B cell (primary cell): ENCODE measurements at regions of chr15 and their contacts with region 1.

Region 1: GRCh38 chr15:82108489-82109078 is 62.8 kb upstream of the MEX3B start:
- DNase-seq: peak; percentile 65
- ATAC-seq: peak; percentile 86
- H3K4me3 ChIP-seq: no peak overlapping the region
- H3K4me3 Mint-ChIP-seq: no peak overlapping the region
- H3K27ac ChIP-seq: no peak overlapping the region
- H3K27ac Mint-ChIP-seq: no peak overlapping the region
- H3K4me1 ChIP-seq: no peaks in the 10 kb centered on the region
- H3K4me1 Mint-ChIP-seq: no peaks in the 10 kb centered on the region
- H3K27me3 ChIP-seq: no peaks in the 10 kb centered on the region
- H3K27me3 Mint-ChIP-seq: peaks cover 4% of the 10 kb centered on the region
- CTCF ChIP-seq: peak; percentile 79

Region 2: GRCh38 chr15:80801891-80802680 is 1306.5 kb before region 1 on chr15:
- CTCF ChIA-PET with region 1: no interaction called
- POLR2A ChIA-PET with region 1: no interaction called
- intact Hi-C with region 1: no loop called
- DNase-seq: no peak
- ATAC-seq: no peak
- H3K4me3 ChIP-seq: no peak overlapping the region
- H3K4me3 Mint-ChIP-seq: no peak overlapping the region
- H3K27ac ChIP-seq: no peak overlapping the region
- H3K27ac Mint-ChIP-seq: no peak overlapping the region
- H3K4me1 ChIP-seq: no peaks in the 10 kb centered on the region
- H3K4me1 Mint-ChIP-seq: no peaks in the 10 kb centered on the region
- H3K27me3 ChIP-seq: no peaks in the 10 kb centered on the region
- H3K27me3 Mint-ChIP-seq: peaks cover 2% of the 10 kb centered on the region
- CTCF ChIP-seq: no peak

Region 3: GRCh38 chr15:81809543-81809942 is 299.0 kb before region 1 on chr15:
- CTCF ChIA-PET with region 1: no interaction called
- POLR2A ChIA-PET with region 1: no interaction called
- intact Hi-C with region 1: no loop called
- DNase-seq: no peak
- ATAC-seq: no peak
- H3K4me3 ChIP-seq: no peak overlapping the region
- H3K4me3 Mint-ChIP-seq: no peak overlapping the region
- H3K27ac ChIP-seq: no peak overlapping the region
- H3K27ac Mint-ChIP-seq: no peak overlapping the region
- H3K4me1 ChIP-seq: no peaks in the 10 kb centered on the region
- H3K4me1 Mint-ChIP-seq: no peaks in the 10 kb centered on the region
- H3K27me3 ChIP-seq: no peaks in the 10 kb centered on the region
- H3K27me3 Mint-ChIP-seq: peaks cover 4% of the 10 kb centered on the region
- CTCF ChIP-seq: no peak

Region 4: DNA sequence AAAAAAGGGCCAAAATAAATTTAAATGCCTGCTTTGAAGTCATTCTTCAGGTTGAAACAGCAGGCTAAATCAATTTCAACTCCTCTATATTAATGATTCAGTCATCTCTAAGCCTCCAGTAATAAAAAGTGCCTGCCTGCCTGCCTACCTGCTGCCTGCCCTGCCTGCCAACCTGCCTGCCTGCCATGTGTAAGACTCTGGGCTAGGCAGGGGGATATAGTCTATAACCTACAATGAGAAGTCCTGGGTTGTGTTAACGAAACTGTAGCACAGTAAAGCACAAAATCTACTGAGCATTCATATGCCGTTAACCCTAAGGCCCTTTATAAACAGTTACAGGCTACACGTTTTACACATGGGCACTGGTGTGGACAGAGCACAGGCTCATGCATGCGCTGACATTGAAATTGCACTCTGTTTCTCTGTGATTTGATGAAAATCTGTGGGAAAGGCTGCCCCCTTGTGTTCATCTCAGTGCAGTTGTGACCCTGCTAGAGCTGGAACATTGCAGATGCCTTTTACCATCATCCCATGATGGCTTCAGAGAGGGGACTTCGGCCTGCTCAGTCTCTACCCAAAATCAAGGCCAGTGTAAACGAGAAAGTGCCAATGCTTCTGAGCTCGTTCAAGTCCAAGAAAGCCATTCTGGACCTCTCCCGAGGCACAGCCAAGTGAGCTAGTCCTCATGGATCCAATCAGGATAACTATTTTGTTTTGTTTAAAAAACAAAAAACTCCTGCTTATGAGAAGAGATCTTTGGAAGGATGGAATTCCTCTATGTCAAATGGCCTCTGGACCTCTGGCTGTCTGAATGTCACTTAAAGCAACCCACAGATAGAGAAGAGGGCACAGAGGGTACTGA is 89.4 kb after region 1 on chr15:
- CTCF ChIA-PET with region 1: interaction called, 17 read pairs
- POLR2A ChIA-PET with region 1: no interaction called
- intact Hi-C with region 1: loop called (anchors 1 kb)
- DNase-seq: peak; percentile 67
- ATAC-seq: peak; percentile 71
- H3K4me3 ChIP-seq: no peak overlapping the region
- H3K4me3 Mint-ChIP-seq: no peak overlapping the region
- H3K27ac ChIP-seq: no peak overlapping the region
- H3K27ac Mint-ChIP-seq: no peak overlapping the region
- H3K4me1 ChIP-seq: peaks cover 0 to 5% of the 10 kb centered on the region in 2 donors
- H3K4me1 Mint-ChIP-seq: peaks cover 6% of the 10 kb centered on the region
- H3K27me3 ChIP-seq: no peaks in the 10 kb centered on the region
- H3K27me3 Mint-ChIP-seq: no peaks in the 10 kb centered on the region
- CTCF ChIP-seq: peak; percentile 81